T-cell (primary cell): ENCODE measurements at regions of chr7 and their contacts with region 1.

Region 1: GRCh38 chr7:128387216-128388144 is 22.3 kb downstream of the IMPDH1 start:
- DNase-seq: peak in 33 of 35 experiments; percentile 12 to 79 (median 53)
- ATAC-seq: peak; percentile 68 to 82 (median 80)
- H3K4me3 ChIP-seq: no peak overlapping the region
- H3K4me3 Mint-ChIP-seq: no peak overlapping the region
- H3K27ac ChIP-seq: no peak overlapping the region
- H3K27ac Mint-ChIP-seq: no peak overlapping the region
- H3K4me1 ChIP-seq: peaks cover 0 to 8% of the 10 kb centered on the region in 2 experiments
- H3K4me1 Mint-ChIP-seq: peaks cover 0 to 6% (median 0%) of the 10 kb centered on the region in 3 donors
- H3K27me3 ChIP-seq: peaks cover 0 to 16% of the 10 kb centered on the region in 2 experiments
- H3K27me3 Mint-ChIP-seq: peaks cover 0 to 5% of the 10 kb centered on the region in 2 donors

Region 2: DNA sequence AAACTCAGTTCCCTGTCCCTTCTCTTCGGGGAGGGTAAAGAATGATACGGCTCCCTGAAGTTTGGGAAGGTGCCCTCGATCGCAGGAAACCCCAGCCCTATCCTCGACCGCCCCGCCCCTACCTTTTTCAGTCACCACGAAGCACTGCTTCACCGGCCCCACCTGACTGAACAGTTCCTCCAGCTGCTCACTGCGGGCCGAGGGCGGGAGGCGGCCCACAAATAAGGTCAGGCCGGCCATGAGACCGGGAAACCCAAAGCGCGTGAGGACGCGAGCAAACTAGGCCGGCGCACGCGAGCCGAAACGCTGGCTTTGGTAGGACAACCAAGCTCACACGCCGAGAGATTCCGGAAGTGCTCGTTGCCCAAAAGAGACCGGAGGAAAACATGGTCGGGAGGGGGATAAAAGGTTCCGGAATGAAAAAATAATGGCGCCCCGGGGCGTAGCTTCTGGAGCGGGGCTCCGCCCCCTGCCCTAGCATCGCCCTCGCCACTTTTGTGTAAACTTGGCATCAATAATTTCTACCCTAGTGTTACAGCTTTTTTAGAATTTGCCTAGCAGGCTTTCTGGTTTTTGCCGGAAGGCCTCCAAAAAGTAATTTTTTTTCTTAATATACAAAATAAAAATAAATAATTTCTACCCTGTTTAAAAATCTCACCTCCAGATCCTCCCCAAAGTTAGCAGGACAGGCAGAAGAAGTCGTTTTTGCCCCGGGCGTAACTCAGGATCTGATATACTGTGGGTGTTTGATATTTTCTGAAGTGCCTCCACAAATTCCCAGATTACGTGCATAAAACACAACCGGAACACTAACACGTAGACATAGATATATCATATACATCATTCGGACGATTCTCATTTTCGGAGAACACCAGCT is 43.7 kb before region 1 on chr7 and contains the start of gene RBM28:
- CTCF ChIA-PET with region 1: interaction called, 21 to 47 read pairs
- POLR2A ChIA-PET with region 1: no interaction called
- DNase-seq: peak; percentile 71 to 92 (median 81)
- ATAC-seq: peak; percentile 94 to 98 (median 96)
- H3K4me3 ChIP-seq: peak within 1 kb of the TSS; percentile 69 to 91
- H3K4me3 Mint-ChIP-seq: peak within 1 kb of the TSS; percentile 92 to 95 (median 94)
- H3K27ac ChIP-seq: peak within 1 kb of the TSS; percentile 52
- H3K27ac Mint-ChIP-seq: peak within 1 kb of the TSS; percentile 89
- H3K4me1 ChIP-seq: peaks cover 13 to 17% of the 10 kb centered on the region in 2 experiments
- H3K4me1 Mint-ChIP-seq: peaks cover 22 to 32% (median 30%) of the 10 kb centered on the region in 3 donors
- H3K27me3 ChIP-seq: peaks cover 0 to 5% of the 10 kb centered on the region in 2 experiments
- H3K27me3 Mint-ChIP-seq: peaks cover 3 to 10% of the 10 kb centered on the region in 2 donors
- total RNA-seq, gene RBM28: 27.3 to 54.3 (median 41.9) TPM

Region 3: DNA sequence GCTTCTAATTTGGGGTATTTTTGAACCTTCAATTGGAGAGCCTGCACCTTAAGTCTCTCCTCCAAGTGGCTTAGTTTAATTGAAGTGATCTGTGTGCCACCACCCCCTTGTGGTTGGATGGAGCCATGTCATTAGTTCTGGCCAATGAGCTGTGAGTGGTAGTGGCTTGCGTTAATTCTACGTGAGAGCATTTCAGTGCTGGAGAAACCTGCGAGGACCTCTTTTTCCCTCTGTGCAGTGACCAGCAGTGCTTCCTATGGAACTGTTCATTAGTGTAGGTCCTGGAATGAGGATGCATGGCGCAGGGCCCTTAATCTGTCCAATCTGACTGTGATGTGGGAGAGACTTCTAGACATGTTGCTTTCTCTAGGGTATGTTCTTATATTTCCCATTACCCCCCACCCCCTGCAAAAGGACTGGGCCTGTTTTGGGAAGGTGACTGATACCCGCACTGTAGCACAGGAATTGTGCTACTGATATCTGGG is 72.0 kb after region 1 on chr7:
- CTCF ChIA-PET with region 1: no interaction called
- POLR2A ChIA-PET with region 1: no interaction called
- DNase-seq: peak; percentile 32 to 86 (median 64)
- ATAC-seq: peak; percentile 51 to 63 (median 54)
- H3K4me3 ChIP-seq: no peak overlapping the region
- H3K4me3 Mint-ChIP-seq: no peak overlapping the region
- H3K27ac ChIP-seq: no peak overlapping the region
- H3K27ac Mint-ChIP-seq: no peak overlapping the region
- H3K4me1 ChIP-seq: peaks cover 4 to 21% of the 10 kb centered on the region in 2 experiments
- H3K4me1 Mint-ChIP-seq: peaks cover 19 to 37% (median 28%) of the 10 kb centered on the region in 3 donors
- H3K27me3 ChIP-seq: peaks cover 0 to 6% of the 10 kb centered on the region in 2 experiments
- H3K27me3 Mint-ChIP-seq: no peaks in the 10 kb centered on the region